Heart left ventricle (tissue), 16 donors: ENCODE measurements at regions of chr6 and their contacts with region 1.

Region 1: DNA sequence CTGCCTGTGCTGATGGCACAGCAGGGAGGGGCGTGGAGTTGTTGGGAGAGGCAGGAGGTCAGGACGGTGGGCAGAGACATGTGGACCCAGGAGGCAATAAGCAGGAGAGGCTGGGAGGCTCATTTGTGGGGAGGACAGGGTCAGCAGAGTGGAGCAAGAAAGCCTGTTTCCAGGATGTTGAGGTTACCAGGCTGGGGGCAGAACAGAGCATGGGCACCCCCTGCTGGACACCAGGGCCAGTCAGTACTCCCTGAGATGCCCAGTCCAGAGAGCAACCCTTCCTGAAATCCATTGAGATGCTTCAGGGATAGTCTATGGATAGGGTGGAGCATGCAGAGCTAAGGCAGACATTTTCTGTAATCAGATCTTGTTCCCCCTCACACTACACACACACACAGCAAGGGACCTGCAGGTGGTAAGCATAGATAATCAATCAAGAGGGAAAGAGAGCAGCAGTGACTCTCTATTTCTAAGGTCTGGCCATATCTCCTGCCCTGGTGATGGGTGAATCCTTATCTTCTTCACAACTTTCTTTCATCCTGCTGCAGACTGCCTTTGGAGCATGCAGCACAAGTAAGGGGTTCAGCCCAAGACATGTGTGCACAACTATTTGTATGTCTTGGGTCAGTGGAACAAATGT is 41.7 kb downstream of the MOCS1 start:
- DNase-seq: peak in 4 of 5 donors; percentile 48 to 64 (median 61)
- ATAC-seq: peak; percentile 45 to 77 (median 70)
- H3K4me3 ChIP-seq: no peak overlapping the region
- H3K27ac ChIP-seq: no peak overlapping the region
- H3K4me1 ChIP-seq: peaks cover 0 to 26% (median 12%) of the 10 kb centered on the region in 12 donors
- H3K27me3 ChIP-seq: no peaks in the 10 kb centered on the region
- CTCF ChIP-seq: peak; percentile 53 to 75 (median 69)
- POLR2A ChIP-seq: no peak

Region 2: DNA sequence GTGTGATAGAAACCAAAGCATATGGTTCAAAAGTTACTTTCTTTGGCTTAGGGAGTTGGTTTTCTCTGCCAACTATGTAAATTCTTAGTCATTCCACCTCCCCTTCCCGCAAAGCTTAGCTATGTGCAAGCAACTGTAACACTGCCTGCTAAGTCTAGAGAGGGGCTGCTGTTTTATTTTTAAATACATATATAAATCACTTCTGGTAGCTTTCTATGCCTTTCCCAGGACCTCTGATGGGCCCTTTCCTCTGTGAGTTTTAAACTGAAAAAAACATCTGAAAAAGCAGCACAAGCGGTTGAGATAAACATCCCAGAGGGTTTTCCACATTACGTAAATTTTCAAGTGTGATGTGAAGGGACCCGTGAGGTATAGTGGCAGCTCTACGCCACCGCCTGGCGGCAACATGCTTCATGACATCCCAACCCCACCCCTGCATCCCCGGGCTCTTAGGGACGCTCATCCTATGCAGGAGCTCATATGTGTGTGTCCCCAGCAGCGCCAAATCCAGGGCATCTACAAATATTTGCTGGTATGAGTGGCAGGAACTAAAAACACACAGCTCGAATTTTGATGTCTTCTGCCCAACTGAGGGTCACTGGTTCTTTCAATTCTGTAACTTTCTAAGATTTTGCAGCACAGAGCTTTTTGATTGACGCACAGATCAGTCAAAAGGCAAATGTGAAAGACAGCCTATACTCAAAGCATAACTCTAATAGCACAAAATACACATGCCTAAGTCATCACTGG is 790.4 kb before region 1 on chr6:
- intact Hi-C with region 1: loop called in 1 of 10 experiments (anchors 10 kb)
- DNase-seq: no peak
- ATAC-seq: peak in 2 of 4 donors; percentile 41 to 65
- H3K4me3 ChIP-seq: no peak overlapping the region
- H3K27ac ChIP-seq: no peak overlapping the region
- H3K4me1 ChIP-seq: peaks cover 0 to 5% (median 0%) of the 10 kb centered on the region in 12 donors
- H3K27me3 ChIP-seq: no peaks in the 10 kb centered on the region
- CTCF ChIP-seq: peak in 7 of 12 donors; percentile 22 to 41 (median 27)
- POLR2A ChIP-seq: no peak

Region 3: GRCh38 chr6:39361657-39362486 is 530.7 kb before region 1 on chr6:
- intact Hi-C with region 1: loop called in 3 of 10 experiments (anchors 5 kb)
- DNase-seq: peak; percentile 45 to 68 (median 61)
- ATAC-seq: peak; percentile 27 to 89 (median 76)
- H3K4me3 ChIP-seq: no peak overlapping the region
- H3K27ac ChIP-seq: no peak overlapping the region
- H3K4me1 ChIP-seq: peaks cover 0 to 12% (median 3%) of the 10 kb centered on the region in 12 donors
- H3K27me3 ChIP-seq: peaks cover 0 to 8% (median 0%) of the 10 kb centered on the region in 9 donors
- CTCF ChIP-seq: peak; percentile 64 to 82 (median 76)
- POLR2A ChIP-seq: no peak

Region 4: DNA sequence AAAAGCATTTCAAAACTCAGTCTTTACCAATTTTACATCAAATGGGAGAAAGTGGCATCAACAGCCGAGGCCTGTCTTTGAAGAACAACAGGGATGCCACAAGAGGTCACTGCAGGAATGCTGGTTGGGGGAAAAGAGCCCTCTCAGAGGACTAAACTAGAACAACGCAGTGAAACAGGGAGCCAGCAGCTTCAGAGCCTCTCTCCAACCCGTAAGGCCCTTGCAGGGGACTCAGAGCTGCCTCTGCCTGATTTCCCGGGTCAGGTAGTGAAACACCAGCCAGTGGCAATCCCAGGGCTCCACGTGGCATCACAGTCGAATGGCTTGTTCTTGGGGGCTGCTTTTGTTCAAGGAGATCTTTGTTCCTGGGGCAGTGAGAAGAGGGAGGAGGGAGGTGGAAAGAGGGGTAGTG is 515.1 kb before region 1 on chr6:
- intact Hi-C with region 1: loop called (anchors 1 to 5 kb)
- DNase-seq: peak in 4 of 5 donors; percentile 59 to 69 (median 62)
- ATAC-seq: peak; percentile 62 to 94 (median 88)
- H3K4me3 ChIP-seq: no peak overlapping the region
- H3K27ac ChIP-seq: no peak overlapping the region
- H3K4me1 ChIP-seq: peaks cover 0 to 10% (median 2%) of the 10 kb centered on the region in 12 donors
- H3K27me3 ChIP-seq: no peaks in the 10 kb centered on the region
- CTCF ChIP-seq: peak; percentile 35 to 77 (median 68)
- POLR2A ChIP-seq: no peak

Region 5: GRCh38 chr6:39577446-39578165 is 315.0 kb before region 1 on chr6:
- intact Hi-C with region 1: no loop called
- DNase-seq: no peak
- ATAC-seq: no peak
- H3K4me3 ChIP-seq: no peak overlapping the region
- H3K27ac ChIP-seq: no peak overlapping the region
- H3K4me1 ChIP-seq: no peaks in the 10 kb centered on the region
- H3K27me3 ChIP-seq: no peaks in the 10 kb centered on the region
- CTCF ChIP-seq: no peak
- POLR2A ChIP-seq: no peak

Region 6: GRCh38 chr6:39865011-39865888 is 27.4 kb before region 1 on chr6:
- intact Hi-C with region 1: loop called in 1 of 10 experiments (anchors 1 kb)
- DNase-seq: peak; percentile 65 to 76 (median 73)
- ATAC-seq: peak in 3 of 4 donors; percentile 51 to 67 (median 60)
- H3K4me3 ChIP-seq: no peak overlapping the region
- H3K27ac ChIP-seq: no peak overlapping the region
- H3K4me1 ChIP-seq: peaks cover 0 to 16% (median 0%) of the 10 kb centered on the region in 12 donors
- H3K27me3 ChIP-seq: no peaks in the 10 kb centered on the region
- CTCF ChIP-seq: peak; percentile 57 to 87 (median 80)
- POLR2A ChIP-seq: no peak

Region 7: DNA sequence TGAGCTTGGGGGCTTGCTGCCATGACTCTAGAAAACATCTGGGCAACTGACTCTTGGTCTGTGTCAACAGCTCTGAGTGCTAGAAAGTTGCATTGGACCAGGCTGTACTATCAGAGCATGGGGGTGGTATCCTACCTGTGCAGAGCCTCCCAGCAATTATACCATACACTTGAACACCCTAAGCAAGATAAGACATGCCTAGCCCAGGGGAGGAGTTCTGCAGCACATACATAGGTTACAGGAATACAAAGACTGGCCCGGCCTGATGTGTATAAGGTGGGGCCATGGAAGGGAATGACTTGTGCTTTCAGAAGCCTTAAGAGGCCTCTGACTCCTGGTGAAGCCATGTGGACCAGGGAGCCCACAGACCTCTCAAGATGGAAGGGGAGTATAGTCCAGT is 53.0 kb after region 1 on chr6:
- intact Hi-C with region 1: no loop called
- DNase-seq: no peak
- ATAC-seq: no peak
- H3K4me3 ChIP-seq: no peak overlapping the region
- H3K27ac ChIP-seq: no peak overlapping the region
- H3K4me1 ChIP-seq: peaks cover 0 to 8% (median 0%) of the 10 kb centered on the region in 12 donors
- H3K27me3 ChIP-seq: no peaks in the 10 kb centered on the region
- CTCF ChIP-seq: no peak
- POLR2A ChIP-seq: no peak

Region 8: GRCh38 chr6:40138273-40138720 is 245.7 kb after region 1 on chr6:
- intact Hi-C with region 1: no loop called
- DNase-seq: no peak
- ATAC-seq: no peak
- H3K4me3 ChIP-seq: no peak overlapping the region
- H3K27ac ChIP-seq: no peak overlapping the region
- H3K4me1 ChIP-seq: no peaks in the 10 kb centered on the region
- H3K27me3 ChIP-seq: peaks cover 0 to 11% (median 0%) of the 10 kb centered on the region in 9 donors
- CTCF ChIP-seq: no peak
- POLR2A ChIP-seq: no peak

Region 9: DNA sequence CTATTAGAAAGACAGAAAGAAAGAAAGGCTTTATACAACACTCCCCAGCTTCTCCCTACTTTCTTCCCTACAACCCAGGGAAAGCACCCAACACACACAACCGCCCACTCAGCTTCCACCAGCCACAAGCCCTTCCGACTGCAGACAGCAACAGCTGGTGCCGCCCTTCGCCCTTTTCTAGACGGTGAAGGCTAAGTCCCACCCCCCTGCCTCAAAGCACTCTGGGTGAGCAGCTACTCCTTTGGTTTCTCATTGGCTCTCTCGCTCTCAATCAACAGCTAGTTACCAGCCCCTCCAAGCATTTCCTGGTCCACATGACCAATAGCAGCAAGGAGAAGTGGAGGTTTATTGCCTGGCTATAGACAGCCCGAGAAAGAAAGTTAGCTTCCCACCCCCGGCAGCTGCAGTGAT is 271.7 kb after region 1 on chr6:
- intact Hi-C with region 1: no loop called
- DNase-seq: no peak
- ATAC-seq: no peak
- H3K4me3 ChIP-seq: no peak overlapping the region
- H3K27ac ChIP-seq: no peak overlapping the region
- H3K4me1 ChIP-seq: no peaks in the 10 kb centered on the region
- H3K27me3 ChIP-seq: peaks cover 0 to 6% (median 0%) of the 10 kb centered on the region in 9 donors
- CTCF ChIP-seq: no peak
- POLR2A ChIP-seq: no peak